Activated CD4-positive, alpha-beta T cell treated with anti-CD3 and anti-CD28 coated beads, Interleukin-2, amount 10 ng/mL, durations not matched to agents 7 days and 5 days (primary cell): ENCODE measurements at regions of chr16 and their contacts with region 1.

Region 1: DNA sequence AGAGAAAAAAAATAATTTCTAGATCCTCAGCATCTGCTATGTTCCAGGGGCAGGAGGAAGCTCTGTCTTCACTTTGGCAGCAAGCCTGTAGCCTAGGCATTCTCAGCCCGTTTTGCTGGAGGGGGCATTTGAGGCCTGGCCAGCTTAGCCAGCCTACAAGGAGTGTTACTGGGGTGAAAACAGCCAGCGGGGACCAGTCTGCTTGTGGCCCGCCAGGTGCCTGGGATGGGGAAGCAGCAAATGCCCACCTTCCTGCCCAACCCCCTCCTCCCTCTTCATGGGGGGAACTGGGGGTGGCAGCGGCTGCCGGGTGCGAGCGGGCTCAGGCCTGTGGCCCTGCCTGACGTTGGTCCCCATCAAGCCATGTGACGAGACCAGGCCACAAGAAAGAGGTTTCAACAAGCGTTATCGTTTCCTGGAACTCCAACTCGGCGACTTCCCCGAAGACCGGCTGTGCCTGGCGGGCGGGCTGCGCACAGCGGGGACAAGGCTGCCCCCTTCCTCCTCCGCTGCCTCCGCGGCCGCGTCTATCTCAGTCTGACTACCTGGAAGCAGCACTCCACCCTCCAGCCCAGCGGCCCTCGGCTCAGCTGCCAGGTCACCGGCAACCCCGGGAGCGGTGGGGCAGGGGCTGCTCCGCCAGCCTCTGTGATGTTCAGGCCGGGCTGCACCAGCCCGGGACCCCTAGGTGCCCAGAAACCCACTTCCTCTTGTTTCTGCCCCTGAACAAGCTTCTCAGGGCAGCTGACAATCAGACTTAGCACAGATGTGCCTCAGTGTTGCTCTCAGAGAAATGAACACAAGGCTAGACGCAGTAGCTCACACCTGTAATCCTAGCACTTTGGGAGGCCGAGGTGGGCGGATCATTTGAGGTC is 22.9 kb downstream of the SOCS1 start:
- DNase-seq: peak; percentile 94
- H3K4me3 Mint-ChIP-seq: peak overlapping the region; percentile 70
- H3K27ac Mint-ChIP-seq: peak overlapping the region; percentile 98
- H3K4me1 Mint-ChIP-seq: peaks cover 85% of the 10 kb centered on the region
- H3K27me3 Mint-ChIP-seq: no peaks in the 10 kb centered on the region

Region 2: DNA sequence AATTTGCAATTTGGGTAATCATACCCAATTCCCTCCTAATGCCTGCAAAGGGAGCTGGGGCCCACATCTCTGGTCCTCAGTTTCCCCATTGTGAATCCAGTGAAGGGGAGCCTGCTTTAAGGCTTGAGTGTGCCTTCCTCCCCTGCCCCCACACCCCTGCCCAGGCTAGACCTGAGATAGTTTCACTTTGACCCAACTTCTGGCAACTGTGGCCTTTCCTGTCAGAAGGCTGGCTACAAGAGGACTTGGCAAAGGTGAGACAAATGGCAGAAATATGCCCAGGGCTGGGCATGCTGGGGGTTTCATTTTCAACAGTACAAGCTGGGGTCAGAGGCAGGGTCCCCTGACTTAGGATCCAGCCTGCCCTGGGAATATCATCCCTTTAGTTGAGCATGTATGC is 12.9 kb after region 1 on chr16:
- CTCF ChIA-PET with region 1: interaction called, 13 read pairs
- POLR2A ChIA-PET with region 1: interaction called, 3 read pairs
- DNase-seq: peak; percentile 39
- H3K4me3 Mint-ChIP-seq: no peak overlapping the region
- H3K27ac Mint-ChIP-seq: no peak overlapping the region
- H3K4me1 Mint-ChIP-seq: peaks cover 54% of the 10 kb centered on the region
- H3K27me3 Mint-ChIP-seq: no peaks in the 10 kb centered on the region